HEK293 (cell line): ENCODE measurements at regions of chr4 and their contacts with region 1.

Region 1: DNA sequence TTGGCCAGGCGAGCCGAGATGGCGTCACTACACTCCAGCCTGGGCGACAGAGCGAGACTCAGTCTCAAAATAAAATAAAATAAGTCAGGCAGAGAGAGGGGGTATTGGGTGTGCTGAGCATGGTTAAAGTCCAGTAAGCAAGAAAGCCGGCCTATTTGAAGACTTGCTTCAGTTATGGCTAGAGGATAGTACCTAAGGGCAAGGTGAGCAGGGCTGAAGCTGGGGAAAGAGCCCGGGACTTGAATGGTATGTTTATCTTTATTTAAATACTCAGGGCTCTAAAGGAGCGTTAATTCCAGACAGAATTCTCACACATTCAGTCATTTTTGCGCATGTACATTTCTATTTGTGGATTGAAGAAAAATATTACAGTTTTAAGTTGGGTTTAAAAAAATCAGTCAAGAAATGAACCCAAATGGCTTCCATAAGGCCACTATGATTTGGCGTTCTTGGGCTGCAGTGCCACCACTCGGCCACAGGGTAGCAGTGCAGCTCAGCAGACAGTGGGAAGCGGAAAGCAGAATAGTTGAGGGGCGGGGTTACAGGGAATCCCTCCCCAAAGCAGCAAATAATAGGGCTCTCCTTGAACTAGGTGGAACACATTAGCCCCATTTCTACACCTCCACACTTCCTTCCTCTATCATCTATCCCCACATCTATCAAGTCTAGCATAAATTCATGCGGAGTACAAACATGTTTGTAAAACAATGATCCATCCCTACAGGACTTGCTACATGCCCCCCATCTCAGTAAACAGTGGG is 37.2 kb upstream of the SH3D19 start:
- H3K4me3 ChIP-seq: no peak overlapping the region
- H3K27ac ChIP-seq: no peak overlapping the region
- H3K4me1 ChIP-seq: no peaks in the 10 kb centered on the region
- CTCF ChIP-seq: peak; percentile 55; the same call in 1 of the 2 replicates

Region 2: DNA sequence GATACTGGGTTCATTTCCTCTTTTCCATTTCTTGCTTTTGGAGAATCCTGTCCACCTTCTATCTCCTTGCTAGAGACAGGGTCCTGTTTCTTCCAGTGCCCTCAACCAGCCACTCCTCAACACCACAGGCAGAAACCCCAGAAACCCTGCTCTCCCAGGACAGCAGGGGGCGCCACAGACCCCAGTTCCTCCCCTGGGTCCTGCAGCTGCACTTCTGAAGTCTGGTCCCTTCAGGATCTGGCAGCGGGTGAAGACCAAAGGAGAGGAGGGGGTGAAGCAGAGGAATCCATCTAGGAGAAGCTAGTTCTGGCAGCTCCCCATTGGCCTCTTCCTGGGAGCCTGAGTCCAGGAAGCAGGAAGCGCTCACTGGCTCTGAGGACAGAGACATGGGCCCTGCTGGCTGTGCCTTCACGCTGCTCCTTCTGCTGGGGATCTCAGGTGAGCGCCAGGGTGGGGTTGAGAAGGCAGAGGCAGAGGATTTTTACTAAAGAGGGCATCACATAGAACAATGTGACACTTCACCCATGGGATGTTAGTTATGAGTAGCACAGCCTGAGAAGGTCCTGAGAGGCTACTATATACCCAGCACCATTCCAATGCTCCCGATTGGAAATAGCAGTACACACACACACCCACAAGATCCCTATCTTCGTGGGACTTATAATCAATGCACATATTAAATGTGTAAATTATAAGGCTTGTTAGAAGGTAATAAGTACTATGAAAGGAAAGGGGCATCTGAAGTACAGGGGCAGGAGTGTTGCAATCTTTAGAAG is 85.6 kb before region 1 on chr4 and contains the start of gene PRSS48:
- CTCF ChIA-PET with region 1: interaction called, 11 read pairs
- POLR2A ChIA-PET with region 1: no interaction called
- H3K4me3 ChIP-seq: no peak within 1 kb of the TSS
- H3K27ac ChIP-seq: no peak within 1 kb of the TSS
- H3K4me1 ChIP-seq: peaks cover 6% of the 10 kb centered on the region; the same call in 1 of the 2 replicates
- CTCF ChIP-seq: peak; percentile 34; the same call in 1 of the 2 replicates